Activated CD4-positive, alpha-beta memory T cell treated with anti-CD3 and anti-CD28 coated beads for 36 hours (primary cell): ENCODE measurements at regions of chrX and their contacts with region 1.

Region 1: GRCh38 chrX:123960042-123960611 is 1.4 kb upstream of the STAG2 start:
- DNase-seq: peak; percentile 94
- H3K4me3 Mint-ChIP-seq: peak overlapping the region; percentile 92
- H3K27ac Mint-ChIP-seq: peak overlapping the region; percentile 99
- H3K4me1 Mint-ChIP-seq: peaks cover 17% of the 10 kb centered on the region
- H3K27me3 Mint-ChIP-seq: no peaks in the 10 kb centered on the region

Region 2: GRCh38 chrX:123833387-123833786 is 126.7 kb before region 1 on chrX:
- CTCF ChIA-PET with region 1: interaction called, 30 read pairs
- POLR2A ChIA-PET with region 1: interaction called, 4 read pairs
- intact Hi-C with region 1: loop called (anchors 2 kb)
- DNase-seq: peak; percentile 73
- H3K4me3 Mint-ChIP-seq: no peak overlapping the region
- H3K27ac Mint-ChIP-seq: no peak overlapping the region
- H3K4me1 Mint-ChIP-seq: peaks cover 12% of the 10 kb centered on the region
- H3K27me3 Mint-ChIP-seq: peaks cover 3% of the 10 kb centered on the region

Region 3: GRCh38 chrX:123878252-123878721 is 81.8 kb before region 1 on chrX:
- CTCF ChIA-PET with region 1: no interaction called
- POLR2A ChIA-PET with region 1: no interaction called
- intact Hi-C with region 1: loop called (anchors 5 kb)
- DNase-seq: no peak
- H3K4me3 Mint-ChIP-seq: no peak overlapping the region
- H3K27ac Mint-ChIP-seq: peak overlapping the region; percentile 58
- H3K4me1 Mint-ChIP-seq: peaks cover 22% of the 10 kb centered on the region
- H3K27me3 Mint-ChIP-seq: no peaks in the 10 kb centered on the region

Region 4: GRCh38 chrX:123899701-123900100 is 60.4 kb before region 1 on chrX:
- CTCF ChIA-PET with region 1: no interaction called
- POLR2A ChIA-PET with region 1: no interaction called
- intact Hi-C with region 1: no loop called
- DNase-seq: no peak
- H3K4me3 Mint-ChIP-seq: no peak overlapping the region
- H3K27ac Mint-ChIP-seq: no peak overlapping the region
- H3K4me1 Mint-ChIP-seq: peaks cover 4% of the 10 kb centered on the region
- H3K27me3 Mint-ChIP-seq: no peaks in the 10 kb centered on the region

Region 5: DNA sequence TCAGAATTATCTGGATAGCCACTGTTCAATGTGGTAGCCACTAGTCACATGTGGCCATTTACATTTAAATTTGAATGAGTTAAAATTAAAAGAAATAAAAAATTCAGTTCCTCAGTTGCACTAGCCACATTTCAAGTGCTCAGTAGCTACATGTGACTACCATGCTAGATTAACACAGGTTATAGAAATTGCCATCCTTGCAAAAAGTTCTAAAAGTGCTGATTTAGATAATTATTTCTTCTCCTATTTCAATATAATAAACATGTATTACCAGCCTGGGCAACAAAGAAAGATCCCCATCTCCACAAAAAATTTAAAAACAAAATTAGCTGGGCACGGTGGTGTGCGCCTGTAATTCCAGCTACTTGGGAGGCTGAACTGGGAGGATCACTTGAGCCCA is 10.3 kb before region 1 on chrX:
- CTCF ChIA-PET with region 1: no interaction called
- POLR2A ChIA-PET with region 1: no interaction called
- intact Hi-C with region 1: no loop called
- DNase-seq: no peak
- H3K4me3 Mint-ChIP-seq: no peak overlapping the region
- H3K27ac Mint-ChIP-seq: no peak overlapping the region
- H3K4me1 Mint-ChIP-seq: no peaks in the 10 kb centered on the region
- H3K27me3 Mint-ChIP-seq: no peaks in the 10 kb centered on the region

Region 6: GRCh38 chrX:124010157-124010556 is 50.0 kb after region 1 on chrX:
- CTCF ChIA-PET with region 1: interaction called, 3 read pairs
- POLR2A ChIA-PET with region 1: interaction called, 3 read pairs
- intact Hi-C with region 1: loop called (anchors 1 kb)
- DNase-seq: no peak
- H3K4me3 Mint-ChIP-seq: peak overlapping the region; percentile 16
- H3K27ac Mint-ChIP-seq: peak overlapping the region; percentile 40
- H3K4me1 Mint-ChIP-seq: peaks cover 65% of the 10 kb centered on the region
- H3K27me3 Mint-ChIP-seq: no peaks in the 10 kb centered on the region

Region 7: DNA sequence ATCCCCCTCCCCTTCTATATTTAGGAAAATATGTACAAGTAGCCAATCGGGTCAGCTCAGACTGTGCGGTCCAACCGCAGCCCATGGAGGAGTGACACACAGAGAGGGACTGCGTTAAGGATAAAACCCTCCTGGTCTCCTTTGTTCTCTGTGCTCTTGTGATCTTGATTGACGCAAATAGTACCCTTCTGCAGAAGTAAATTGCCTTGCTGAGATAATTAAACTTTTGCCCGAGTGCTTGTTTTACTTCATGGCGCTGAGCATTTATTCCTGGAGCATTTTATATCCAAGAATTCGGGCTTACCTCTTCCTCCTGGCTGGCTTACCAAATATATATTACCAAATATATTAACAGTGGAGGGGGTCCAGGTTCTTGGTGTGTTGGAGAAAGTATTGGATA is 185.6 kb after region 1 on chrX:
- CTCF ChIA-PET with region 1: no interaction called
- POLR2A ChIA-PET with region 1: no interaction called
- intact Hi-C with region 1: no loop called
- DNase-seq: no peak
- H3K4me3 Mint-ChIP-seq: no peak overlapping the region
- H3K27ac Mint-ChIP-seq: no peak overlapping the region
- H3K4me1 Mint-ChIP-seq: no peaks in the 10 kb centered on the region
- H3K27me3 Mint-ChIP-seq: peaks cover 1% of the 10 kb centered on the region

Region 8: GRCh38 chrX:124217304-124218251 is 257.5 kb after region 1 on chrX:
- CTCF ChIA-PET with region 1: no interaction called
- POLR2A ChIA-PET with region 1: no interaction called
- intact Hi-C with region 1: loop called (anchors 2 kb)
- DNase-seq: peak; percentile 78
- H3K4me3 Mint-ChIP-seq: peak overlapping the region; percentile 54
- H3K27ac Mint-ChIP-seq: peak overlapping the region; percentile 96
- H3K4me1 Mint-ChIP-seq: peaks cover 66% of the 10 kb centered on the region
- H3K27me3 Mint-ChIP-seq: no peaks in the 10 kb centered on the region